ENCODE measurements at regions of chr7 and their contacts with region 1.

Region 1: DNA sequence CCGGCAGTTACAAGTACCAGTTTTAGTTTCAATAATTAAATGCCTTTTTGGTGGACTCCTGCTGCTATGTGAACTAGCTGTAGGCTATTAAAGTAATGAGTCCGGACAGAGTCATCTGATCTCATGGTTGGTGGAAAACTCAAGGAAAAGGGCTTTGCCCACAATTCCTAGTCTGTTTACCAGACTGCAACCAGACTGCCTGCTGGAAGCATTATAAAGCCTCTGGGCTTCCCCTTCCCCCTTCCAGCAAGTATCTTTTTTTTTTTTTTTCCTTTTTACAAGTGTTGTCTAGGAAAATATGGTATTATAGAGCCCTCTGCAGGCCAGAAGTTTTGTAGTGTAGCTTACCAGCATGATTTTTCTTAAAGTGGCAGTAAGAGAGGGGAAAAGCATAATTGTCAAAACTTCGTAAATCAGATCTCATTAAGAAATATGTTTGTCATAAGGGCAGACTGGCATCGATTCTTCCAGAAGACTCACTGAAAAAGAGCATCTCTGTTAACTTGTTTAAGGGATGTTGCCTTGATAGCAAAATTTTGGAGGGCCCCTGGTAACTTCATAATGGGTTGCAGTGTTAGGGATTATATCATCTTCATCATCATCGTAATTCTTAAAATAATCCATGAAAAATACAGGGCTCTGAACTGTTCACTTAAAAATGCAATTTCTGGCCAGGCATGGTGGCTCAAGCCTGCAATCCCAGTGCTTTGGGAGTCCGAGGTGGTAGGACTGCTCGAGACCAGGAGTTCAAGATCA is 181.3 kb downstream of the TAX1BP1 start:
- DNase-seq: peak; percentile 72
- H3K4me3 Mint-ChIP-seq: no peak overlapping the region
- H3K27ac Mint-ChIP-seq: no peak overlapping the region
- H3K4me1 Mint-ChIP-seq: no peaks in the 10 kb centered on the region
- H3K27me3 Mint-ChIP-seq: no peaks in the 10 kb centered on the region
- CTCF ChIP-seq: peak; percentile 46

Region 2: DNA sequence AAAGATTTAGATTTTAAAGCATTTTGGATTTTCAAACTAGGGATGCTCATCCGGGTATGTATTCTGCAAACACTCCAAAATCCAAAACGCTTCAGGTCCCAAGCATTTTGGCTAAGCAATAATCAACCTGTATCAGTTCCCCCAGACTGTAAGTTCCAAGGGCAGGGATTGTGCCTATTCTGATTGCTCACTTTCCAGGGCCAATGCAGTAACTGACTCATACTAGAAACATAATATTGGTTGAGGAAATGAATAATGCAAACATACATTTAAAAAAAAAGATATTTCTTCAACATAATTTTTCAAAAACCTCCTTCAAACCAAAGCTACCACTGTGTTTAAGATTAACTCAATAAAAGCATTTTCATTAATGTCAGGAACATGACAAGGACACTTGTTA is 328.0 kb before region 1 on chr7:
- CTCF ChIA-PET with region 1: interaction called, 3 read pairs
- POLR2A ChIA-PET with region 1: no interaction called
- intact Hi-C with region 1: loop called (anchors 5 kb)
- DNase-seq: no peak
- H3K4me3 Mint-ChIP-seq: no peak overlapping the region
- H3K27ac Mint-ChIP-seq: no peak overlapping the region
- H3K4me1 Mint-ChIP-seq: no peaks in the 10 kb centered on the region
- H3K27me3 Mint-ChIP-seq: no peaks in the 10 kb centered on the region
- CTCF ChIP-seq: no peak

Region 3: GRCh38 chr7:27689591-27690164 is 231.6 kb before region 1 on chr7:
- CTCF ChIA-PET with region 1: interaction called, 3 read pairs
- POLR2A ChIA-PET with region 1: no interaction called
- intact Hi-C with region 1: loop called (anchors 1 kb)
- DNase-seq: peak; percentile 37
- H3K4me3 Mint-ChIP-seq: no peak overlapping the region
- H3K27ac Mint-ChIP-seq: no peak overlapping the region
- H3K4me1 Mint-ChIP-seq: no peaks in the 10 kb centered on the region
- H3K27me3 Mint-ChIP-seq: no peaks in the 10 kb centered on the region
- CTCF ChIP-seq: no peak

Region 4: DNA sequence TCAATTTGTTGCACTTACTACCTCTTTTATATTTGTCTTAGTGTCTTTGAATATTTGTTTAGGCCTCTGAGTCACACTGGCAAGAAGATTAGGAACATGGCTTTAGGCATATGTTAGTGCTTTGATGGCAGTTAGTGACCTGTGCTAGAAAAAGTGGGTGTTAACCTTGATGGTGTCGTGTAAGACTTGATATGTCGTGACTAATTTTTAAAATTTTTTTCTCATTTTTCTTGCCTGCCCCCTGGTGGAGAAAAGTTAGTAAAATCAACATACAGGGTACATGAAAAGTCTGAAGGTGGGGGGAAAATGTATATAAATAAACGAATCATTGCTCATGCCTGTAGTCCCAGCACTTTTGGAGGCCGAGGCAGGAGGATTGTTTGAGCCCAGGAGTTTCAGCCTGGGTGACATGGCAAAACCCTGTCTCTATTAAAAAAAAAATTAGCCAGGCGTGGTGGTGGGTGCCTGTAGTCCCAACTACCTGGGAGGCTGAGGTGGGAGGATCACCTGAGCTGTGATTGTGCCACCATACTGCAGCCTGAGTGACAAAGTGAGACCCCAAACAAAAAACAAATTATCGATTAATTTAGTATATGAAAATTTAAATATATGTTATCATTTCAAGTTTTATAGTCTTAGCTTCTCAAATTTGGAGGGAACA is 136.7 kb before region 1 on chr7:
- CTCF ChIA-PET with region 1: interaction called, 3 read pairs
- POLR2A ChIA-PET with region 1: no interaction called
- intact Hi-C with region 1: loop called (anchors 5 kb)
- DNase-seq: peak; percentile 67
- H3K4me3 Mint-ChIP-seq: no peak overlapping the region
- H3K27ac Mint-ChIP-seq: peak overlapping the region; percentile 59
- H3K4me1 Mint-ChIP-seq: peaks cover 13% of the 10 kb centered on the region
- H3K27me3 Mint-ChIP-seq: no peaks in the 10 kb centered on the region
- CTCF ChIP-seq: peak; percentile 45

Region 5: GRCh38 chr7:27883696-27884095 is 37.6 kb before region 1 on chr7:
- CTCF ChIA-PET with region 1: no interaction called
- POLR2A ChIA-PET with region 1: no interaction called
- intact Hi-C with region 1: no loop called
- DNase-seq: no peak
- H3K4me3 Mint-ChIP-seq: no peak overlapping the region
- H3K27ac Mint-ChIP-seq: no peak overlapping the region
- H3K4me1 Mint-ChIP-seq: no peaks in the 10 kb centered on the region
- H3K27me3 Mint-ChIP-seq: no peaks in the 10 kb centered on the region
- CTCF ChIP-seq: no peak

Region 6: GRCh38 chr7:27905951-27906350 is 15.3 kb before region 1 on chr7:
- CTCF ChIA-PET with region 1: interaction called, 18 read pairs
- POLR2A ChIA-PET with region 1: no interaction called
- intact Hi-C with region 1: no loop called
- DNase-seq: no peak
- H3K4me3 Mint-ChIP-seq: no peak overlapping the region
- H3K27ac Mint-ChIP-seq: no peak overlapping the region
- H3K4me1 Mint-ChIP-seq: no peaks in the 10 kb centered on the region
- H3K27me3 Mint-ChIP-seq: no peaks in the 10 kb centered on the region
- CTCF ChIP-seq: no peak

Region 7: DNA sequence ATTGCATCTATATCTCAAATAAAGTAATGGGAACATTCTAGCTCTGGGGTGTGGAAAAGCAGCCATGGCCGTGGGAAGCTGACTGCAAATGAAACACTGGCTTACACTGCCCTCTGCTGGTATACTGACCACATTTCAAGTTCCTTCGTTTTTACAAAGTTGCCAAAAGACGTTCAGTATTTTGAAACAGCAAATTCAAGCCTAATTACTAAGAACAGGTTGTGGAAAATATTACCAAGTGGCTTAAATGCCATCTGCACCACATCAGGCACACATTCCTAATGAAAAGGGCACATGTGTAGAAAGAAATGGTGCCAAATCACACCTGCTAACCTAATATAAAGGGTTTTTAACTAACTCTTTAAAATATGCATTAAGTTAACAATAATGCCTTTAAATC is 175.5 kb after region 1 on chr7:
- CTCF ChIA-PET with region 1: interaction called, 4 read pairs
- POLR2A ChIA-PET with region 1: no interaction called
- intact Hi-C with region 1: loop called (anchors 10 kb)
- DNase-seq: peak; percentile 69
- H3K4me3 Mint-ChIP-seq: no peak overlapping the region
- H3K27ac Mint-ChIP-seq: no peak overlapping the region
- H3K4me1 Mint-ChIP-seq: no peaks in the 10 kb centered on the region
- H3K27me3 Mint-ChIP-seq: no peaks in the 10 kb centered on the region
- CTCF ChIP-seq: peak; percentile 70

Measured in MCF 10A (cell line).